ENCODE measurements at regions of chr17 and their contacts with region 1.

Region 1: DNA sequence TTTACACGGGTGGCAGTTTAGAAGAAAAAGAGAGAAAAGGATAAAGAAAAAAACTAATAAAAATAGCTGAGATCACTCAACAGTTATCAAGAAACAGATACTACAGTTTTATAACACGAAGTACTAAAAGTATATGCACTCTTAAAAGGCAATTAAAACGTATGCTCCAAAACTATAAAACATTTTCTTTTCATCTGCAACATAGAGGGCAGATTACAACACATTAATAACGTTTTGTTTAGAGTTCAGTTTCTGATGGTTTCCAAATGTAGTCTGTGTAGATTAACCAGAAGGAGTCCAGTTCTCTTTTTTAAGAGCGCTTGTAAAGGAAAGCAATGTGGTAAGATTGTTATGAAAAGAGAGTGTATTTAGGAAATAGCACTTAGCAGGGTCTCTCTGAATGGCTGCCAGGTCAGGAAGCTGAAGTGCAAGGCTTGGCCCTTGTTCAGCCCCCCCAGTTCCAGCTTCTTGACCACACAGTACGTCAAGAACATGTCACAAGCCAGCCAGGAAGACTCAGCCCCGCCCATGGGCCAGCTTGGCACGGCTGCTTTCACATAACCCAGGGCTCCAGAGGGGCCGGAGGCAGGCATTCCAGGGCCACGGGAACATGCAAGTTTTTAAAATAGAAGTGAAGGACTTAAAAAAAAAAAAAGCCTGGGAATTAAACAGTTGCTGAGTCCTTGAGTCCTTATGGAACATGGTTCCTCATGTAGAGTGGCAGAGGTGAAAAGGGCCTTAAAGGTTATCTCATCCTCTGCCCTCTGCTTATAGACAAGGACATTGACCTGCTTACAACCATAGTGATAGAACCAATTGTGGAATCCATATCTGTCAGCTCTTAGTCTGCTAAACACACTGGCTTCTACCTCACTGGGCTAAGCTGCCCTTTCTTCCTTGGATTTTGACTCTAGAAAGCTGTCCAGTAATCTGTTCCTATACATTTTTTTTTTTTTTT is 147.4 kb upstream of the TBX2 start:
- DNase-seq: peak; percentile 60
- H3K4me3 ChIP-seq: no peak overlapping the region
- H3K27ac ChIP-seq: peak overlapping the region; percentile 15 to 40
- H3K4me1 ChIP-seq: peaks cover 4% of the 10 kb centered on the region
- H3K27me3 ChIP-seq: no peaks in the 10 kb centered on the region
- CTCF ChIP-seq: no peak
- POLR2A ChIP-seq: no peak

Region 2: GRCh38 chr17:61002316-61002736 is 249.9 kb before region 1 on chr17:
- intact Hi-C with region 1: loop called (anchors 10 kb)
- DNase-seq: no peak
- H3K4me3 ChIP-seq: no peak overlapping the region
- H3K27ac ChIP-seq: no peak overlapping the region
- H3K4me1 ChIP-seq: no peaks in the 10 kb centered on the region
- H3K27me3 ChIP-seq: no peaks in the 10 kb centered on the region
- CTCF ChIP-seq: peak; percentile 14 to 66 (median 57)
- POLR2A ChIP-seq: no peak

Region 3: GRCh38 chr17:61157246-61157886 is 94.9 kb before region 1 on chr17:
- intact Hi-C with region 1: loop called (anchors 10 kb)
- DNase-seq: no peak
- H3K4me3 ChIP-seq: peak overlapping the region in 1 of 2 donors; percentile 14
- H3K27ac ChIP-seq: no peak overlapping the region
- H3K4me1 ChIP-seq: no peaks in the 10 kb centered on the region
- H3K27me3 ChIP-seq: no peaks in the 10 kb centered on the region
- CTCF ChIP-seq: no peak
- POLR2A ChIP-seq: no peak

Region 4: DNA sequence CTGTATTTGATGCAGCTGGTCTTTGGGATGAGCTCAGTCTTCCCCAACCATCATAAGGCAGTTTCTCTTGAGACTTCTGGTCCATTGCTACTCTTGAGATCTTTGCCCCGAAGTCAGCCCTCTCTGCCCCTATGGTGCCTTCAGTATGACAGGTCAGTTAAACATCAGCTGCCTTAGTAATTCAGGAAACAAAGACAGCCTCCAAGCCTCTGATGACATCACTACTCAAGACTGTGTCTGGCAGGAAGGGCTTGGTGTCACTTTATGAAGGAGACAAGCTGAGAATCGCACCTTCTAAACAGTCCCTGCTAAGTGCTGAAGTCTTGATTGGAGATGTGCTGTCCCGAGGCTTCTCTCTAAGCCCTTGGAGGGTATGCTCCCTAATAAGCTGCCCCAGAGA is 42.6 kb after region 1 on chr17:
- intact Hi-C with region 1: loop called (anchors 5 kb)
- DNase-seq: no peak
- H3K4me3 ChIP-seq: no peak overlapping the region
- H3K27ac ChIP-seq: no peak overlapping the region
- H3K4me1 ChIP-seq: no peaks in the 10 kb centered on the region
- H3K27me3 ChIP-seq: no peaks in the 10 kb centered on the region
- CTCF ChIP-seq: no peak
- POLR2A ChIP-seq: no peak

Region 5: DNA sequence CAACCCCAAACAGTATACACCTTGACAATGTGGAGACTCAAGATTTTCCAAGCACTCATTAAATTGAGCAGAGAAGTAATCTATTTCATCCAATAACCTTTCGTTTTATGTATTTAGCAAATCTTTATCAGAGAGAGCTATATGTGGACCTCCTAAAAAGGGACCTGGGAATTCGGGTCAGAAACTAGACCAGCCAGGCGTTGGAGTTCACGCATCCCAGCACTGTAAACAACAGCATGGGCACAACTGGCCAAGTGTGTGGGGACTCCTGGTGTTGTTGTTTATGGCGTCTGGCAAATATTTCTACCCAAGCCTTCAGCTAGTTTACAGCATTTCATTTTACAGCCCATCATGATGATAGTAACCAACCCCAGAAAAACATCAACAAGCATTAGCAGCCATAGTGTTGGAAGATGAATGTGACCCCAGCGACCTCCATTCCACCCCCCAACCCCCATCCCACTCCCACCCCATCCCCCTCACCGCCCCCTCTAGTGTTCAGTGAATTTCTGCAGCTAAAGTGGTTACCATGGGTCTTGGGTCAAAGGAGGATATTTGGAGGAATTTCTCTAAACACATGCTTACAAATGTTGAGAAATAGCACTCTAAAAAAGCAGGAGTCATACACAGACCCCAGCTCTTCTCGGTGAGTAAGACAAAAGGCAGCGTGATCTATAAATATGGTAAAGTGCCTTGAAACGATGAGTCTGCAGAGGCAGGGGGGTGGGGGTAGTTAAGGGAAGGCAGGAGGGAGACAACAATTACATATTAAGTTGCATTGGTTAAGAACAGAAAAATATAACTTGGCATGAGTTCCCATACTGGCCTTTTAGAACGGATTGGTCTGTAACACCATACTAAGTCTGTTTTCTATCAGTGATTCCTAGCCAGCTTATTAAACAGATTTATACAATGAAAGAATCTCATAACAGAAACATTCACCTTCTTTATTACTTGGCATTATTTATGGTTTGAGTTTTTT is 56.0 kb after region 1 on chr17:
- intact Hi-C with region 1: loop called (anchors 5 kb)
- DNase-seq: no peak
- H3K4me3 ChIP-seq: no peak overlapping the region
- H3K27ac ChIP-seq: peak overlapping the region in 1 of 2 donors; percentile 30
- H3K4me1 ChIP-seq: no peaks in the 10 kb centered on the region
- H3K27me3 ChIP-seq: no peaks in the 10 kb centered on the region
- CTCF ChIP-seq: no peak
- POLR2A ChIP-seq: no peak

Region 6: GRCh38 chr17:61389670-61390478 is 137.7 kb after region 1 on chr17:
- intact Hi-C with region 1: loop called (anchors 5 kb)
- DNase-seq: no peak
- H3K4me3 ChIP-seq: no peak overlapping the region
- H3K27ac ChIP-seq: no peak overlapping the region
- H3K4me1 ChIP-seq: no peaks in the 10 kb centered on the region
- H3K27me3 ChIP-seq: no peaks in the 10 kb centered on the region
- CTCF ChIP-seq: peak; percentile 70 to 85 (median 74)
- POLR2A ChIP-seq: no peak

Region 7: GRCh38 chr17:61536436-61536955 is 284.3 kb after region 1 on chr17:
- intact Hi-C with region 1: no loop called
- DNase-seq: no peak
- H3K4me3 ChIP-seq: no peak overlapping the region
- H3K27ac ChIP-seq: no peak overlapping the region
- H3K4me1 ChIP-seq: no peaks in the 10 kb centered on the region
- H3K27me3 ChIP-seq: no peaks in the 10 kb centered on the region
- CTCF ChIP-seq: no peak
- POLR2A ChIP-seq: no peak

Measured in prostate gland (tissue), 2 donors.